ENCODE measurements at regions of chr16 and their contacts with region 1.

Region 1: GRCh38 chr16:28069971-28070794 is 6.7 kb upstream of the GSG1L start:
- DNase-seq: no peak
- H3K4me3 ChIP-seq: peak overlapping the region in 1 of 2 experiments; percentile 43; a peak in 1 of 4 replicates
- H3K27ac ChIP-seq: no peak overlapping the region
- H3K4me1 ChIP-seq: no peaks in the 10 kb centered on the region
- H3K27me3 ChIP-seq: no peaks in the 10 kb centered on the region; the same call in 1 of the 2 replicates
- CTCF ChIP-seq: no peak
- EP300 ChIP-seq: no peak
- RAD21 ChIP-seq: no peak

Region 2: DNA sequence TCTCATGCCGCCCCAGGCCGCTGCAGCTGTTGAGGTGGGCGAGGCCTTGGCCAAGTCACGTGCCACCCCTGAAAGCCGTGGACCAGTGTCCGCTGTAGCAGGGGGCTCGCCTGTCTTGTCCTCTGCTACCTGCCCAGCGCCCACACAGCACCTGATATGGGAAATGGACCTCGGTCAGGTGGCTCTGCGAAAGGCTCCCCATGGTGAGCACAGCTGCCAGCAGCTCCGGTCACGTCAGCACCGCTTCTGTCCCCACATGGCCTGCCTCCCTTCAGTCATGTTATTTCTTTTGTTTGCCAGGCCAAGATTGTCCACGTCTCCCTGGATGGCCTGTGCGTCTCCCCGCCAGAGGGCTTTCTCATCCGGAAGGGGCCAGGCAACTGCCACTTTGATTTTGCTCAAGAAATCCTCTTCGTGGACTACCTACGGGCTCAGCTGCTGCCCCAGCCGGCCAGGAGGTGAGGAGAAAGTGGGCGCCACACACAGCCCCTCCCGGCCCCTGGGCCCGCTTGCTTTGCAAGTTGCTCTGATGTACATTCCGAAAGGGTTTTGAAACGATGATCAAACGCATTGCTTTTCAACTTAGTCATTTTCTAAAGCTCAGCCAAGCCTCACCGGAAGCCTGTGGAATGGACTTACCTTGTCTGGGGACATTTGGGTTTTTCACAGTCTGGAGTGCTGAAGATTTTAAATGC is 300.5 kb before region 1 on chr16:
- CTCF ChIA-PET with region 1: interaction called, 10 read pairs
- POLR2A ChIA-PET with region 1: no interaction called
- DNase-seq: no peak
- H3K4me3 ChIP-seq: no peak overlapping the region
- H3K27ac ChIP-seq: no peak overlapping the region; a peak in 1 of 4 replicates
- H3K4me1 ChIP-seq: peaks cover 0 to 7% of the 10 kb centered on the region in 2 experiments; a peak in 1 of 4 replicates
- H3K27me3 ChIP-seq: no peaks in the 10 kb centered on the region
- CTCF ChIP-seq: no peak
- EP300 ChIP-seq: no peak
- RAD21 ChIP-seq: no peak

Region 3: GRCh38 chr16:27867122-27868110 is 202.8 kb before region 1 on chr16:
- CTCF ChIA-PET with region 1: interaction called, 13 read pairs
- POLR2A ChIA-PET with region 1: no interaction called
- DNase-seq: peak; percentile 92
- H3K4me3 ChIP-seq: no peak overlapping the region
- H3K27ac ChIP-seq: no peak overlapping the region
- H3K4me1 ChIP-seq: no peaks in the 10 kb centered on the region
- H3K27me3 ChIP-seq: no peaks in the 10 kb centered on the region
- CTCF ChIP-seq: peak; percentile 56
- EP300 ChIP-seq: no peak
- RAD21 ChIP-seq: peak; percentile 70

Region 4: GRCh38 chr16:28035866-28036393 is 34.3 kb before region 1 on chr16:
- CTCF ChIA-PET with region 1: interaction called, 14 read pairs
- POLR2A ChIA-PET with region 1: no interaction called
- DNase-seq: no peak
- H3K4me3 ChIP-seq: no peak overlapping the region
- H3K27ac ChIP-seq: no peak overlapping the region
- H3K4me1 ChIP-seq: no peaks in the 10 kb centered on the region
- H3K27me3 ChIP-seq: peaks cover 6% of the 10 kb centered on the region; the same call in 1 of the 2 replicates
- CTCF ChIP-seq: no peak
- EP300 ChIP-seq: no peak
- RAD21 ChIP-seq: no peak

Region 5: DNA sequence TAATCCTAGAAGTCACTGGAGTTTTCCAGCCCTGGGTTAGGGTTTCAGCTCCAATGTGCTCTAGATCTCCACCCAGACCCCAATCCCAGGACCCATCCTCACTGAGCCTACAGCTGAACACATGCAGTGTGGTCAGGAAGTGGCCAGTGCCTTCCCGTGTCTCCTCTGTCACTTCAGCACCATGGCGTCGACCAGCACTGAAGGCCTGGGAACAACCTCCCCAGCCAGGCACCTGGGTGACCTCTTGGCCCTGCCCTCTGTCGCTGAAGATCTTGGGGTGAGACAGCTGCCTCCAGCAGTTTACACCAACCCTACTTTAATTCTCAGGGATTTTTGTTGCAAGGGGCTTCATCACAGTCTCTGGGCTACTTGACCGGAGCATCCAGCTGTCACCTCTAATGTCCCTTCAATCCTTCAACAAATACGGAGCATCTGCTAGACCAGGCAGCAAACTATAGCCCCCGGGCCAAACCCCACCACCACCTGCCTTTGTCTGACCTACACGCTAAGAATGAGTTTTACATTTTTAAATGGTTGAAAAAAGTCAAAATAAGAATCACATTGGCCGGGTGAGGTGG is 11.3 kb after region 1 on chr16:
- CTCF ChIA-PET with region 1: interaction called, 21 read pairs
- POLR2A ChIA-PET with region 1: no interaction called
- DNase-seq: no peak
- H3K4me3 ChIP-seq: no peak overlapping the region
- H3K27ac ChIP-seq: no peak overlapping the region
- H3K4me1 ChIP-seq: no peaks in the 10 kb centered on the region
- H3K27me3 ChIP-seq: no peaks in the 10 kb centered on the region
- CTCF ChIP-seq: no peak
- EP300 ChIP-seq: no peak
- RAD21 ChIP-seq: no peak

Region 6: GRCh38 chr16:28118636-28119035 is 48.5 kb after region 1 on chr16:
- CTCF ChIA-PET with region 1: no interaction called
- POLR2A ChIA-PET with region 1: no interaction called
- DNase-seq: no peak
- H3K4me3 ChIP-seq: no peak overlapping the region
- H3K27ac ChIP-seq: no peak overlapping the region
- H3K4me1 ChIP-seq: no peaks in the 10 kb centered on the region
- H3K27me3 ChIP-seq: no peaks in the 10 kb centered on the region
- CTCF ChIP-seq: no peak
- EP300 ChIP-seq: no peak
- RAD21 ChIP-seq: no peak

Region 7: DNA sequence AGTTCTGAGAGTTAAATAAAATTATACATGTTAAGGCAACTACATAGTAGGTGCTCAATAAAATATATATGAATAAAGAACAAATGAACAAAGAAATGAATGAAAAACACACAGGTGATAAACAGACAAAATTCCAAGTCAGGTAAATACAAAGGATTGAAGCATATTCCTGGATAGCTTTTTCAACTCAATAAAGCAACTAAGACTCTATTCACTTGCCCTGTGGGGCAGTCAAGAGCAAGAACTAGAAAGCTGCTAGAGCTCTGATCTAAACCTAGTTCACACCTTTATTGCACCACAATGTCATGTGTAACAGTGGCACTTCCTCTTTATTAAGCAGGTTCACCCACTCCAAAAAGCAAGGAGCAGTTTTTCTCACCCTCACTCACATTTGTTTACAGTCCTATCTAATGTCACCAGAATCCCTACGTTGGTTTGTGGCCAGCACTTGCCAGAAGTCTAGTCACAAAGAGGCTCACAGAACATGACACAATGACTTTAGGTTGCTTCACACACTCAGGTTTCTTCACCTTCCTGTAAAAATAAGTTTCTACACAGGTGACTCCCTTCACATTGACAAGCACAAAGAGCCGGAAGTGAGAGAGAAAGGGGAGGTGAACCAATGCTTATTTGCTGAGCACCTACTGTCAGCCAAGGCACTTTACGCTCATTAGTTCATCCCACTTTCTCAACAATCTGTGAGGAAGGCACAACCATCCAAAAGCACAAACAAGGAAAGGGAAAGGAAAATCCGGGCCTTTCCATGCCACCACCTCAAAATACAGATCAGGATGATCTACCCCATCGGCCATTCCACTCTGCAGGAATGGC is 70.8 kb after region 1 on chr16:
- CTCF ChIA-PET with region 1: no interaction called
- POLR2A ChIA-PET with region 1: no interaction called
- DNase-seq: no peak
- H3K4me3 ChIP-seq: no peak overlapping the region
- H3K27ac ChIP-seq: no peak overlapping the region
- H3K4me1 ChIP-seq: peaks cover 0 to 9% of the 10 kb centered on the region in 2 experiments; a peak in 2 of 4 replicates
- H3K27me3 ChIP-seq: no peaks in the 10 kb centered on the region
- CTCF ChIP-seq: no peak
- EP300 ChIP-seq: no peak
- RAD21 ChIP-seq: no peak